ENCODE measurements at regions of chr9 and their contacts with region 1.

Region 1: GRCh38 chr9:34072868-34073590 is 24.3 kb upstream of the UBAP2 start:
- DNase-seq: no peak
- H3K4me3 Mint-ChIP-seq: no peak overlapping the region
- H3K27ac Mint-ChIP-seq: no peak overlapping the region
- H3K4me1 Mint-ChIP-seq: no peaks in the 10 kb centered on the region
- H3K27me3 Mint-ChIP-seq: peaks cover 1% of the 10 kb centered on the region

Region 2: DNA sequence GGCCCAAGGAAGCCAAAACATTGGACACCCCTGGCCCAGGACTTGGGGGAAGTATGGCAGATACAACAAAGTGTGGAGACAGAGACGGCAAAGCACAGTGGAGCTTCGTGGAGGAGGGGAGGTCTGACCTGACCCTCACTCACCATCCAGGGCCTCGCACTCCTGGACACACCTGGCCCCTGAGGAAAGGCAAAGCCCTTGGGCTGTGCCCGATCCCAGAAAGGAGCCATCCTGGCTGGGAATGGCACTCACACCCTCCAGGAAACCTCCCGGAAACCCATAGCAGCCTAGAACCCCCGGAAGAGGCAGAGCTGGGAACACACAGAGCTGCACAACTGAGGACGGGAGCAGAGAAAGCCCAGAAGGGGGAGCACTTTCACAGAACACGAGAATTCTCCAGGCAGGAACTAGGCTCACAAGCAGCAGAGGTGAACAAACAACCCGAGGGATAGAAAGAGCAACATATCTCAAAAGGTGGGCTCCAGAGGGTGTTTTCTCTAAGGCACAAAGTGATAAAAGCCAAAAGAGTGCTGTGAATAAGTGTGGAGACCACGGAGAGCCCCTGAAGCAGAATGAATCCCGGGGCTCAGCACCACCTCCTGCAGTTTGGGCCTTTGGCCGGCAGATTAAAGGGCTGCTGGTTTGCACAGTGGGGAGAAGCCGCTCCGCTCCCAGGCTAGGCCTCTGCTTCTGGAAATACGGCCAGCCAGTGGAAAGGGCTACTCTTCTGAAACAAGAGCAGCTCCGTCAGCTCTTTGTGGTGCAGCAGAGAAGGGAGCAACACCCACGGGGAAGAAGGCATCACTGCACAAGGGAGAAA is 147.8 kb before region 1 on chr9:
- intact Hi-C with region 1: loop called (anchors 2 kb)
- DNase-seq: peak; percentile 76
- H3K4me3 Mint-ChIP-seq: no peak overlapping the region
- H3K27ac Mint-ChIP-seq: peak overlapping the region; percentile 35
- H3K4me1 Mint-ChIP-seq: no peaks in the 10 kb centered on the region
- H3K27me3 Mint-ChIP-seq: no peaks in the 10 kb centered on the region

Region 3: DNA sequence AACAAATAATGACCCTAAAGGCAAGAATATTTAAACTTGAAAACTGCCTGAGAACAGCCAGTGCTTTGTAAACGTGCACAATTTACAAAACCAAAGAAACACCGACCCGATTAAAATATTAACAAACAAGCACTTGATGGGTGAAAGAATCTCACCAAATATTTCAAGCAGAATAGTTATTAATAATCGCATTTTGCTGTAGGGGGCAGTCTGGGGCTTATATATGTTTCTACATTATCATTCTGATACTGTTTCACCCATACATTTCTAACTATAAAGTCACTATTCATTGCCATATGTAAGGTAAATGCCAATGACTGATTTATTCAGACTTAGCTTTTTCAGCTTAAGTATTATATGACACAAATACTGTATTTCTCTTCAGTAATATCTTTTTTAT is 62.0 kb before region 1 on chr9:
- intact Hi-C with region 1: no loop called
- DNase-seq: peak; percentile 62
- H3K4me3 Mint-ChIP-seq: no peak overlapping the region
- H3K27ac Mint-ChIP-seq: no peak overlapping the region
- H3K4me1 Mint-ChIP-seq: peaks cover 2% of the 10 kb centered on the region
- H3K27me3 Mint-ChIP-seq: no peaks in the 10 kb centered on the region

Region 4: GRCh38 chr9:34413231-34413852 is 340.3 kb after region 1 on chr9:
- intact Hi-C with region 1: no loop called
- DNase-seq: peak; percentile 87
- H3K4me3 Mint-ChIP-seq: no peak overlapping the region
- H3K27ac Mint-ChIP-seq: no peak overlapping the region
- H3K4me1 Mint-ChIP-seq: no peaks in the 10 kb centered on the region
- H3K27me3 Mint-ChIP-seq: no peaks in the 10 kb centered on the region

Region 5: GRCh38 chr9:34777666-34778065 is 704.6 kb after region 1 on chr9:
- intact Hi-C with region 1: no loop called
- DNase-seq: no peak
- H3K4me3 Mint-ChIP-seq: no peak overlapping the region
- H3K27ac Mint-ChIP-seq: no peak overlapping the region
- H3K4me1 Mint-ChIP-seq: no peaks in the 10 kb centered on the region
- H3K27me3 Mint-ChIP-seq: peaks cover 19% of the 10 kb centered on the region